ENCODE measurements at regions of chr1 and their contacts with region 1.

Region 1: DNA sequence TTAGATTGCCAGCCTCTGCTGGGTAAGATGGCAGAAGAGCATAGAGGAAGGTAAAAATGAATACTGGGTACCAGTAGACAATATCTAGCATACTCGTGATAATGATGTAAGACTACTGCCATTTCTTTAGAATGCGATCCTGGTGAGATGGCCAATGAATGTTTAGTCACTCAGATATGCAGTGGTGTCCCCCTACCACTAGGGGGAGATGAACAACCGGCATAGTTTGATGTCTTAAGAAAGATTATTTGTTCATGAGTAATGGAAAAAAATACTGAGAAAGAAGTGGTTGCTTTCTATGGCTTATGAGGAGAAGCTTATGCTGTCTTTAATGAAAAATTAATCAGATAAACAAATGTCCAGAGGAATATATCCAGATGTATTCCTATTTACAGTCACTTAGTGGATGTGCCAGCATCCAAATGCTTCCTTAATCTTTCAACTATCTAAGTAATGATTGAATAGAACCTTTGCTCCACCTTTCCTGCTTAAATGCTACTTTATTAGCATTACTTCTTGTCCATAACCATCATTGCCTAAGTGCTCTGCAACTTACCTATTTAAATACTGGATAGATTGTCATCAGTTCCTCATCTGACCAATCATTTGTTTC is 256.6 kb downstream of the ST6GALNAC3 start:
- DNase-seq: peak; percentile 26
- H3K4me3 ChIP-seq: no peak overlapping the region
- CTCF ChIP-seq: peak; percentile 81

Region 2: GRCh38 chr1:75932304-75932703 is 398.8 kb before region 1 on chr1 and contains the start of gene ASB17:
- CTCF ChIA-PET with region 1: no interaction called
- POLR2A ChIA-PET with region 1: no interaction called
- DNase-seq: no peak
- H3K4me3 ChIP-seq: no peak within 1 kb of the TSS
- CTCF ChIP-seq: no peak

Region 3: DNA sequence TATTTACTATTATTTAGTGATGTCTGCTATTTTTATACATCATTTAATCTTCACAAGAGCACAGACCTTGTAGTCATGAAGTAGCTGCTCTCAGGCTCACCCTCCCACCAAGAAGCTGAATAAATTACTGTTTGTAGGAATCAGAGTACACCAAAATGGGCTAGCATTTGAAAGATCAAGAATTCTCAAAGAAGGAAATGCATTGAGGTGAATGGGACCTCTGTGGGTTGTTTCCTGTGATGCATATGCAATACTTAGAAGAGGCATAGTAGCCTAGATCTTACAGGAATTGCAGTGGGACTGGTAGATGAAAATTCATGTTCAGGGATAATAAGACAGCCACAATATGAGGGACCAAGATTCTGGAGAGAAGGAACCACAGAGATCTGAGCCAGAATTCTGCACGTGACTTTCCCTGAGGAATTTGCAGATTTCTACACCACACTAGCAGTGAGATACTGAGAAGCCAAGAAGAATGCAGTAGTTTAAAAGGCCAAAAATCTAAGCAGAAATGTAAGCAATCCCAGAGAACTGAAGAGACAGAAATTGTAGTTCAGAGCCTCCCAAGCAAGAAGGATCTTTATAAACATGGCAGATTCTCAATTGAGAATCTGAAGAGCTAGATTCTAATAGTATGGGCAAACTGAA is 50.5 kb after region 1 on chr1:
- CTCF ChIA-PET with region 1: no interaction called
- POLR2A ChIA-PET with region 1: no interaction called
- DNase-seq: no peak
- H3K4me3 ChIP-seq: no peak overlapping the region
- CTCF ChIP-seq: no peak

Region 4: GRCh38 chr1:77126307-77126706 is 795.2 kb after region 1 on chr1:
- CTCF ChIA-PET with region 1: interaction called, 23 read pairs
- POLR2A ChIA-PET with region 1: no interaction called
- DNase-seq: peak; percentile 34
- H3K4me3 ChIP-seq: no peak overlapping the region
- CTCF ChIP-seq: peak; percentile 63

Region 5: DNA sequence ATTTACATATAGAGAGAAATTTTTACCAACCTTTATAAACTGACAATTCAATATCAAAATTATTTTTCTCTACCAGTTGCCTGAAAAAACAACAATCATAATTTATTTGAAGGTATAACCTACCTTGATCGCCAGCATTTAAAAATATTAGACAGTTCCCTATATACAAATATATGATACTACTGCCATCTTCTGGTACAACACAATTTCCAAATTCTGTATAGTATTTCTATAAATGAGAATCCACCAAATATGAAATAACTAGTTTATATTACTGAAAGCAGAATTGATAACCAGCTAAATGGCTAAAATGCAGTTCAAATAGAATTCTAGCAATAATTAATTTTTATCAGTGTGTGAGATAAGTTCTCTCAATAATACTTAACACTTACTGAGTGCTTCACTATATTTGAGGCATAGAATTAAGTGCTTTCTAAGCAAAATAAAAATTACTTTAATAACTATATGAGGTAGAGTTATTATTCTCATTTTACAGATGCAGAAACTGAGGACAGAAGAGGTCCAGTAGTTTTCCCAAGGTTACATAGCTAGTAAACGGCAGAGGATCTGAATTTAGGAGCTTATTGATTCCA is 812.5 kb after region 1 on chr1:
- CTCF ChIA-PET with region 1: interaction called, 17 read pairs
- POLR2A ChIA-PET with region 1: no interaction called
- DNase-seq: no peak
- H3K4me3 ChIP-seq: no peak overlapping the region
- CTCF ChIP-seq: no peak